ENCODE measurements at regions of chr14 and their contacts with region 1.

Region 1: GRCh38 chr14:63543000-63543825 is at the start of gene PPP2R5E:
- DNase-seq: peak; percentile 98
- ATAC-seq: peak; percentile 99
- total RNA-seq, gene PPP2R5E: 33.4 to 36.6 TPM

Region 2: GRCh38 chr14:63240221-63240620 is 303.0 kb before region 1 on chr14:
- intact Hi-C with region 1: no loop called
- DNase-seq: no peak
- ATAC-seq: no peak

Region 3: DNA sequence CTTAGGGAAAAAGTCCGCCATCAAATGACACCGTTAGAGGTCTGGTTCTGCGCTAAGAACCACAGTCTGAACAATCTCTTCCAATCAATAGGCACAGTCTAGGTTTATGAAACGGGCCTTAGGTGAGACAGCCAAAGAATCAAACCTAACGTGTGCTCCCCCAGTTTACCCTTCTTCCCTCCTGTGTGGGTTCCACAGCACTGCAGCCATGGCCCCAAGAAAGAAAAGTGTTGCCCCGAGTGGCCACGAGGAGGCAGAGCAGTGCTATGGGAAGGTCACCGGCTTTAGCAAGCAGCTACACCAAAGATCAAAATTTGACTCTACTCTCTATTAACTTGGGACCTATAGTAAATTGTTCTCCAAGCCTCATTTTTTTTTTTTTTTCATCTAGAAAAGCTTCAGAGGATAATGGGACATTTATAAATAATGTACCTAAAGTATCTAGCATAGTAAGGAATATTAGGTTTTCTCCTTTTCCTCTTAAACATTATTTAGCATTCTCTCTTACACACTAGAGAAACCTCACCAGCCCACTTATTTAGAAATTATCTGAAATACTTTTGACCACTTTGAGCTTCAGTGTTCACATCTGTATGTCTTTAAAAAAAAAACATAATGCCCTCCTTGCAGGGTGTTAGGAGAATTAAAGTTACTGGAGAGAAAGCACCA is 154.3 kb before region 1 on chr14:
- intact Hi-C with region 1: loop called (anchors 2 to 10 kb)
- DNase-seq: peak; percentile 63
- ATAC-seq: peak; percentile 81 to 91

Region 4: GRCh38 chr14:63426838-63427352 is 116.3 kb before region 1 on chr14:
- intact Hi-C with region 1: loop called in 1 of 2 experiments (anchors 10 kb)
- DNase-seq: no peak
- ATAC-seq: no peak

Region 5: GRCh38 chr14:63641473-63642228 is 98.4 kb after region 1 on chr14 and contains the start of gene WDR89:
- intact Hi-C with region 1: loop called in 1 of 2 experiments (anchors 5 kb)
- DNase-seq: peak; percentile 98
- ATAC-seq: peak; percentile 97 to 99
- total RNA-seq, gene WDR89: 5.5 to 8.6 TPM

Measured in left cardiac atrium (tissue), 4 donors.